HEK293 (cell line): ENCODE measurements at regions of chr9 and their contacts with region 1.

Region 1: GRCh38 chr9:82456642-82457041 is 468.1 kb downstream of the SPATA31D1 start:
- H3K4me3 ChIP-seq: no peak overlapping the region
- H3K27ac ChIP-seq: no peak overlapping the region
- H3K4me1 ChIP-seq: no peaks in the 10 kb centered on the region
- CTCF ChIP-seq: no peak

Region 2: DNA sequence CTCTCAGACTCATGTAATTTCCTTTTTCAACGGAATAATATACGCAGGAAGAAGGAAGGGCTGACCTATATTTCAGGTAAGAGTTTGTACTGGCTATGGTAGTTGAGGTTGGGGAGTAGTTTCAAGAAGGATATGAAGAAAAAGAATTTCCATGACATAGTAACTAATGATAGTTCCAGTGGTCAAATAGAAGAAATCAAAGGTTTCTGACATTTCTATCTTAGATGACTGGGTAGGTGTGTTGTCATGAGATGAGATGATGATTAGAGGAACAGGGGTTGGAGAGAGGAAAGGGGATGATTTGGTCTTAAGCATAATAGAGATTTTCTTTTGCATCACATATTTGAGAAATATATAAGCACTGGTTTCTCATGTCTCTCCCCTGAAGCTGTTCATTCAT is 302.1 kb before region 1 on chr9:
- CTCF ChIA-PET with region 1: no interaction called
- POLR2A ChIA-PET with region 1: no interaction called
- H3K4me3 ChIP-seq: no peak overlapping the region
- H3K27ac ChIP-seq: no peak overlapping the region
- H3K4me1 ChIP-seq: peaks cover 3% of the 10 kb centered on the region
- CTCF ChIP-seq: no peak

Region 3: GRCh38 chr9:82466616-82467260 is 10.1 kb after region 1 on chr9:
- CTCF ChIA-PET with region 1: interaction called, 16 read pairs
- POLR2A ChIA-PET with region 1: no interaction called
- H3K4me3 ChIP-seq: no peak overlapping the region
- H3K27ac ChIP-seq: no peak overlapping the region
- H3K4me1 ChIP-seq: no peaks in the 10 kb centered on the region
- CTCF ChIP-seq: no peak